ENCODE measurements at regions of chr5 and their contacts with region 1.

Region 1: DNA sequence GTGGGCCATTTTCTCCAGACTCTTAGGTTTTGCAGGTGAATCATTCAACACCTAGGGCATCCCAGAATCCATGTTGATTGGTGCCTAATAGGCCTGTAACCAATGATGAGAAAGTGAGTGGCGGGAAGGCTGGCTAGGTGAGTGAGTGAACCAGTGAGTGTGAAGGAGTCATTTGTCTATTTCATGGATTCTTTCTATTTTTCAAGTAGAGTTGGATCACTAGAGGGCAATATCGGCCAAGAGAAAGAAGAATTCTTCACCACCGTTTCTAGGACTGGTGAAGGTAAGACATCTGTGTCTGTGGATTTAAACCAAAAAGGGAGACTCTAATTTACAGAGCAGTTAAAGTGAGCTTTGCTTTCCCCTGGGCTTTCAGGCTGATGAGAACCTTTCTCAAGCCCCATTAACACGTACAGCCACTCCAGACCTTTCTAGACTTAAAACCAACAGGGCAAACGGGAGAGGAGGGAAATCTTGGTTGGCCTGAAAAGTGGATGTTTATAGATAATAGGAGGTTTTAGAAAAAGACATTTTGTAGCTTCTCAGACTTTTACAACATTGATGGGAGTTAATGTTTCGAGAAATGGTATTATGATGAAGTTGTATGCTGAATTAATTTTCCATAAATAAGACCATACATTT is 114.3 kb upstream of the IL12B start:
- DNase-seq: peak; percentile 69
- ATAC-seq: peak; percentile 82
- H3K4me3 ChIP-seq: no peak overlapping the region
- H3K27ac ChIP-seq: no peak overlapping the region
- H3K4me1 ChIP-seq: peaks cover 3% of the 10 kb centered on the region; the same call in 1 of the 2 replicates
- H3K27me3 ChIP-seq: no peaks in the 10 kb centered on the region
- CTCF ChIP-seq: peak; percentile 79
- POLR2A ChIP-seq: no peak
- RAD21 ChIP-seq: peak; percentile 86

Region 2: GRCh38 chr5:159156426-159157238 is 287.9 kb before region 1 on chr5:
- CTCF ChIA-PET with region 1: no interaction called
- POLR2A ChIA-PET with region 1: no interaction called
- dilution Hi-C with region 1: no loop called
- in situ Hi-C with region 1: loop called (anchors 10 kb)
- intact Hi-C with region 1: loop called (anchors 5 kb)
- DNase-seq: peak; percentile 83
- ATAC-seq: peak; percentile 70
- H3K4me3 ChIP-seq: no peak overlapping the region
- H3K27ac ChIP-seq: no peak overlapping the region
- H3K4me1 ChIP-seq: peaks cover 5% of the 10 kb centered on the region
- H3K27me3 ChIP-seq: no peaks in the 10 kb centered on the region
- CTCF ChIP-seq: peak; percentile 84
- POLR2A ChIP-seq: no peak
- RAD21 ChIP-seq: peak; percentile 89

Region 3: GRCh38 chr5:159764283-159765134 is 319.9 kb after region 1 on chr5:
- CTCF ChIA-PET with region 1: no interaction called
- POLR2A ChIA-PET with region 1: no interaction called
- dilution Hi-C with region 1: no loop called
- in situ Hi-C with region 1: no loop called
- intact Hi-C with region 1: loop called (anchors 5 kb)
- DNase-seq: peak; percentile 94
- ATAC-seq: peak; percentile 82
- H3K4me3 ChIP-seq: no peak overlapping the region
- H3K27ac ChIP-seq: peak overlapping the region; percentile 95
- H3K4me1 ChIP-seq: peaks cover 19% of the 10 kb centered on the region
- H3K27me3 ChIP-seq: no peaks in the 10 kb centered on the region
- CTCF ChIP-seq: no peak
- POLR2A ChIP-seq: no peak
- RAD21 ChIP-seq: no peak

Region 4: DNA sequence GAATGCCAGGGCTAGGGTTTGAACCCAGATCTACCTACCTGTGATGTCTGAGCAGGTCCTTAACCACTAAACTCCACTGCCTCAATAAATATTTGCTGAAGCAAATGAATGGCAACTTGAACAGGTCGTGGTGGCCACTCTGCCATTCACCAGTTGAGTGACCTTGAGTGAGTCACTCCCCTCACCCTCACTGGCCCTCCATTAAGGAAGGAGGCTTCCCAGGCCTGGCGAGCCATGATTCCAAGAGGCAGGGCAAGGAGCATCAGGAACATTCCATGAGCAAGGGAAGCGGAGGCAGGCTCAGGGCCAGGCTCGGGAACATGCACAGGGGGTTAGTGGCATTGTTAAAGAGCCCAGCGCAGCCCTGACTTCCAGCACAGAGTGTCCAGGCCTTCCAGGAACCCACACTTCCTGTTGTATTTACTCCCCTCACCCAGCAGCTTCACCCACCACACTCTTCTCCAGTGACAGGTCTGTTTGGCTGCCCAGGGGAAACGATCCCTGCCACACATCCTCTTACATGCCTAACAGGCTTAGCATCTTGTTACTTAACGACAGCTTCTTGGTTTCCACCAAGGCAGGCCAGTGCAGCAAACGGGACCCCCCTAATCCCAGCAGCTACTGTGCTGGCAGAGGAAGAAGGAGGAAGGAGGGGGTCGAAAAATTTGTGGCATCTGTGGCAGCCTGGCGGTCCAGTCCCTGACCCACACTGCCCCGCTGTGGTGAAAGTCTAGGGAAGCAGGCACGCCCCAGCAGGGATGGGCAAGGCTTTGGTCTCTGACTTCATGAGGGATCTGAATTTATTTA is 520.7 kb after region 1 on chr5:
- CTCF ChIA-PET with region 1: interaction called, 4 read pairs
- POLR2A ChIA-PET with region 1: no interaction called
- dilution Hi-C with region 1: no loop called
- in situ Hi-C with region 1: loop called (anchors 10 kb)
- intact Hi-C with region 1: loop called (anchors 1 kb)
- DNase-seq: peak; percentile 57
- ATAC-seq: peak; percentile 96
- H3K4me3 ChIP-seq: no peak overlapping the region
- H3K27ac ChIP-seq: no peak overlapping the region
- H3K4me1 ChIP-seq: peaks cover 5% of the 10 kb centered on the region
- H3K27me3 ChIP-seq: no peaks in the 10 kb centered on the region
- CTCF ChIP-seq: peak; percentile 71
- POLR2A ChIP-seq: no peak
- RAD21 ChIP-seq: peak; percentile 85

Region 5: GRCh38 chr5:159987031-159987674 is 542.6 kb after region 1 on chr5:
- CTCF ChIA-PET with region 1: interaction called, 8 read pairs
- POLR2A ChIA-PET with region 1: no interaction called
- dilution Hi-C with region 1: no loop called
- in situ Hi-C with region 1: no loop called
- intact Hi-C with region 1: loop called (anchors 1 kb)
- DNase-seq: peak; percentile 58
- ATAC-seq: peak; percentile 94
- H3K4me3 ChIP-seq: peak overlapping the region; percentile 39
- H3K27ac ChIP-seq: no peak overlapping the region
- H3K4me1 ChIP-seq: peaks cover 4% of the 10 kb centered on the region; the same call in 1 of the 2 replicates
- H3K27me3 ChIP-seq: peaks cover 4% of the 10 kb centered on the region
- CTCF ChIP-seq: peak; percentile 83
- POLR2A ChIP-seq: 0 out of 2 replicates have a peak, but pooled peaks have one; percentile 26
- RAD21 ChIP-seq: peak; percentile 87

Region 6: DNA sequence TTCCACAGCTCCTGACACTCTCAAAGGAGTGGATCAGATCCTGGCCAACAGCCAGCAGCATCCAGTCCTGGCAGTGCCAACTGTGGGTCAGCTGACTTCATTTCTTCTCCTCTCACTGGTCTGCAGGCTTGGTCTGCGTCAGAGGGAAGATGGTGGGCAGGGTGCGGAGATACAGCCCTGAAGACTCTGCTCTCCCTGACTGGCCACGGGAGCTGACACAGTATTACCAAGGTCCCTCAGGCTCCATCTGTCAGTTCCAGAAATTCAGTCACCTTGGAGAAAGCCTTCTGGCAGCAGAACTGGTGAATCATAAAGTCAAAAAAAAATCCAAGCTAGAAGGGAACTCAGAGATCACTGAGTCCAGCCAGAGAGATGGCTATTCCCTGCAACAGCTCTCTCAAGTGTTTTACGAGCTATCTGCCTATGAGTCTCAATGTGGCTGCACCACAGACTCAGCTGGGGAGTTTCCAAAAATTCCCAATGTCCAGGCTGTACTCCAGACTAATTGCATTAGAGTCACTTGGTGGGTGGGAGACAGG is 897.9 kb after region 1 on chr5:
- CTCF ChIA-PET with region 1: no interaction called
- POLR2A ChIA-PET with region 1: no interaction called
- dilution Hi-C with region 1: no loop called
- in situ Hi-C with region 1: loop called (anchors 25 kb)
- intact Hi-C with region 1: loop called (anchors 5 kb)
- DNase-seq: peak; percentile 61
- ATAC-seq: no peak
- H3K4me3 ChIP-seq: no peak overlapping the region
- H3K27ac ChIP-seq: no peak overlapping the region
- H3K4me1 ChIP-seq: peaks cover 2% of the 10 kb centered on the region; the same call in 1 of the 2 replicates
- H3K27me3 ChIP-seq: no peaks in the 10 kb centered on the region
- CTCF ChIP-seq: no peak
- POLR2A ChIP-seq: no peak
- RAD21 ChIP-seq: no peak

Region 7: DNA sequence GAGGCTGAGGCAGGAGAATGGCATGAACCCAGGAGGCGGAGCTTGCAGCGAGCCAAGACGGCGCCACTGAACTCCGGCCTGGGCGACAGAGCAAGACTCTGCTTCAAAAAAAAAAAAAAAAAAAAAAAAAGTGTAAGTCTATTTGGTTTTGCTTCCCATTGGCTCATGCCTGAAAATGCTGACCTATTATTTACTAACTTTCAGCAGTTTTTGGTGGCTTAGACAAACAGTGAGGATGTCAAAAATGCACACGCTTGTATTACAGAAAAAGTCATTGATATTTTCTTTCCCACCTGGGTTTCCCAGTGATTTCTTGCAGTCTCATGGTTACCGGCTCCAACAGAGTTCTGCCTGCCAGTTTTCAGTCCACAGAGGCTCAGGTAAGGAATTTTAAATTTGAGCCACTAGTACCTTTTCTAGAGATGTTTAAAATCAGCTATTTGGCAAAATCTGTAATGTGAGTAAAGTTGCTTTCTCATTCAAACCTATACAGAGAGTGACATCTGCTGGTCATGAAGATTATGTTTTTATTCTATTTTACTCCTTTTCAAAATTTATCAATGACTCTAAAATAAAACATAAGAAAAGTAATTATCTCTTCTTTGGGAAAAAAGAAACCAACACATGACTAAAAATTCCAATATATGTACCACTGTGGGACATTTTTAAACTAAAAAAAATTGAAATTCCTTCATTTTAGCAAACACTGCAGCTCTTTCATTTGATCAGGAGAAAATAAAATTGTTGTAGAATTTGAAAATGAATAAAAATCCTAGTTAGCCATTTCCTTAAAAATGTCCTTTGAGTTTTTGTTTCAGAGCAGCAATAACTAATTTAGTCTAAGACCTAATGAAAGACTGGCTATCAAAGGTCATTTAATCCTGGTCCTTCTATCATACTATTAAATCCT is 946.5 kb after region 1 on chr5:
- CTCF ChIA-PET with region 1: no interaction called
- POLR2A ChIA-PET with region 1: no interaction called
- dilution Hi-C with region 1: no loop called
- in situ Hi-C with region 1: no loop called
- intact Hi-C with region 1: loop called (anchors 5 kb)
- DNase-seq: peak; percentile 36
- ATAC-seq: no peak; the same call in 1 of the 2 replicates
- H3K4me3 ChIP-seq: no peak overlapping the region
- H3K27ac ChIP-seq: no peak overlapping the region
- H3K4me1 ChIP-seq: no peaks in the 10 kb centered on the region
- H3K27me3 ChIP-seq: no peaks in the 10 kb centered on the region
- CTCF ChIP-seq: peak; percentile 59
- POLR2A ChIP-seq: no peak
- RAD21 ChIP-seq: peak; percentile 69